PC-9 (cell line): ENCODE measurements at regions of chr16 and their contacts with region 1.

Region 1: GRCh38 chr16:19113453-19114351 is at the start of gene ITPRIPL2:
- DNase-seq: peak; percentile 90 to 95
- H3K4me3 ChIP-seq: peak within 1 kb of the TSS; percentile 85
- H3K27ac ChIP-seq: peak within 1 kb of the TSS; percentile 96
- H3K4me1 ChIP-seq: peaks cover 68% of the 10 kb centered on the region
- H3K27me3 ChIP-seq: no peaks in the 10 kb centered on the region
- CTCF ChIP-seq: no peak
- total RNA-seq, gene ITPRIPL2: 117 and 142 TPM in 2 replicates

Region 2: GRCh38 chr16:19094541-19095365 is 18.9 kb before region 1 on chr16:
- CTCF ChIA-PET with region 1: interaction called, 4 read pairs
- POLR2A ChIA-PET with region 1: interaction called, 10 read pairs
- intact Hi-C with region 1: loop called (anchors 1 kb)
- DNase-seq: no peak
- H3K4me3 ChIP-seq: no peak overlapping the region
- H3K27ac ChIP-seq: peak overlapping the region; percentile 99
- H3K4me1 ChIP-seq: peaks cover 46% of the 10 kb centered on the region
- H3K27me3 ChIP-seq: no peaks in the 10 kb centered on the region
- CTCF ChIP-seq: no peak

Region 3: DNA sequence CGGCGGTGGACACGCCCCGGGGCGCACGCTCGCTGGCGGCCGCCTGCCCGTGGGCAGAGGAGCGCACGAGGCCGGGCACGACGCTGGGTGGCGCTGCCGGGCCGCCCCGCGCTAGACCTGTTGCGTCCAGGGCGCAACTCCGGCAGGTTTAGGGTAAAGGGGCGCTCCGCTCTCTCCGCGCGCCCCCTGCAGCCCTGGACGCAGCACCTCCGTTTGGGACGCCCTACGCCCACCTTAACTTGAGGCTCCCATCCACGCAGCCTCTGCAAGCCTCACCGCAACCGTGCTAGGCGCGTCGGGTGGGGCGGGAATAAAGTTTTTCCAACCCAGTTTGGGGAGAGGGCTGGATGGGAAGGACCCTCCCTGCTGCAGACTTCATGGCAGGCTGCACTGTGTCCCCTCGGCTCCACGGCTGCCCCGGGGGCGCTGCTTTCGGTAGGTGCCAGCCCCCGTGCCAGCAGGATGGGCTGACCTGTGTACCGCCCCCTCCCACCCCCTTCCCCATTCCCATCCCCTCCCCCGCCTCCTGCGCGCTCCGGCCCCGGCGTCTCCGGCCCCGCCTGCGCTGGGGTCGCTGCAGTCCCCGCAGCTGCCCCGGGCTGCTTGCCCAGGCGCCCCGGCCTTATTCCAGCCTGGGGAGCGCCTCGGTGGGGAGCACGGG is 54.1 kb after region 1 on chr16 and contains the start of gene SYT17:
- CTCF ChIA-PET with region 1: interaction called, 6 read pairs
- POLR2A ChIA-PET with region 1: interaction called, 61 read pairs
- intact Hi-C with region 1: no loop called
- DNase-seq: peak; percentile 60 to 90
- H3K4me3 ChIP-seq: peak within 1 kb of the TSS; percentile 96
- H3K27ac ChIP-seq: 0 out of 2 replicates have a peak within 1 kb of the TSS, but pooled peaks have one; percentile 25
- H3K4me1 ChIP-seq: peaks cover 33% of the 10 kb centered on the region
- H3K27me3 ChIP-seq: no peaks in the 10 kb centered on the region
- CTCF ChIP-seq: peak; percentile 75
- total RNA-seq, gene SYT17: 36.6 and 45.2 TPM in 2 replicates

Region 4: DNA sequence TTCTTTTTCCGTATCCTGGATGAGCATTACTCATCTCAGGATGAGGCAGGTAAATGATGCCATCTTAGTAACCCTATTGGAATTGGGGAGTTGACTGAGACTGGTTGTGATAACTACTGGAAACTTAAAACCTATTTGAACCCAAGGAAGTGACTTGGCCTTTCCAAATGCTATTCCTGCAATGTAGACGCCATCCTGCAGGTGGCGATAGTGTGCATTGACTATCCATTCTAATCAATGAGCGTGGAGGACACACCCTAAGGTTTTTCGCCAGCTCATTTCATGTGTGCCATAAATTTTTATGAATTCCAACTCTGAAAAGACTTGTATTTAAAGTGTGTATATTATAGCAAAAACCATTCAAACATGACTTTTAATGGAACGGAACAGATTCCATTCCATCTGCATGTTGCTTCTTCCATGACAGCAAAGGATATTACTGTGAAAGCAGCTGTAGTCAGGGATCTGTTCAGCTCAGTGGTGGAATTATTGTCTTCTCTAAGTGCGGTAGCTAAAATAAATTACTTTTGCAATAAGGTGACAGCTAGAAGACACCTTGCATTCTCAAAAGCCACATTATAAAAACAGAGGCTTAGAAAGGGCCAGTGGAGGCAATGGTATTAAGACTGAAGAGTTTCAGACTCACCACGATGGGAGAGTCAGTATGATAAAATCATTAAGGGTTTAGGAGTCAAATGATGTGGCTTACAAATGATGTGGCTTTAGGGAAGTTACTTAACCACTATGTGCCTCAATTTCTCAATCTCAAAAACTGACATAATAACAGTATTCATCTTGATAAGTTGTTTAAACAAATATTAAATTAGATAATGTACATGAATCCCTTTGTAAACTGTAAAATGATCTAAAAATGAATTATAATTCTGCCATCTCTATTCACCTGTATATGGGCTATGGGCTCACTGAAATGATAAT is 109.8 kb after region 1 on chr16:
- CTCF ChIA-PET with region 1: no interaction called
- POLR2A ChIA-PET with region 1: no interaction called
- intact Hi-C with region 1: no loop called
- DNase-seq: no peak
- H3K4me3 ChIP-seq: no peak overlapping the region
- H3K27ac ChIP-seq: no peak overlapping the region
- H3K4me1 ChIP-seq: peaks cover 18% of the 10 kb centered on the region
- H3K27me3 ChIP-seq: no peaks in the 10 kb centered on the region
- CTCF ChIP-seq: peak; percentile 74